ENCODE measurements at regions of chr16 and their contacts with region 1.

Region 1: GRCh38 chr16:57720142-57720575 is 15.4 kb upstream of the KATNB1 start:
- DNase-seq: peak; percentile 80 to 90
- H3K4me3 ChIP-seq: no peak overlapping the region
- H3K4me3 Mint-ChIP-seq: no peak overlapping the region
- H3K27ac Mint-ChIP-seq: no peak overlapping the region
- H3K4me1 ChIP-seq: no peaks in the 10 kb centered on the region
- H3K4me1 Mint-ChIP-seq: no peaks in the 10 kb centered on the region
- H3K27me3 ChIP-seq: no peaks in the 10 kb centered on the region
- H3K27me3 Mint-ChIP-seq: no peaks in the 10 kb centered on the region
- CTCF ChIP-seq: peak; percentile 80 to 95

Region 2: GRCh38 chr16:57576429-57576870 is 143.7 kb before region 1 on chr16:
- CTCF ChIA-PET with region 1: no interaction called
- POLR2A ChIA-PET with region 1: no interaction called
- intact Hi-C with region 1: loop called (anchors 1 kb)
- DNase-seq: peak; percentile 74 to 82
- H3K4me3 ChIP-seq: no peak overlapping the region
- H3K4me3 Mint-ChIP-seq: no peak overlapping the region
- H3K27ac Mint-ChIP-seq: no peak overlapping the region
- H3K4me1 ChIP-seq: 0 out of 2 replicates have a peak, but pooled peaks cover 4% of the 10 kb centered on the region
- H3K4me1 Mint-ChIP-seq: no peaks in the 10 kb centered on the region
- H3K27me3 ChIP-seq: no peaks in the 10 kb centered on the region
- H3K27me3 Mint-ChIP-seq: no peaks in the 10 kb centered on the region
- CTCF ChIP-seq: peak; percentile 97

Region 3: GRCh38 chr16:57600048-57600835 is 119.9 kb before region 1 on chr16:
- CTCF ChIA-PET with region 1: interaction called, 3 read pairs
- POLR2A ChIA-PET with region 1: no interaction called
- intact Hi-C with region 1: loop called (anchors 1 kb)
- DNase-seq: peak; percentile 84 to 88
- H3K4me3 ChIP-seq: no peak overlapping the region
- H3K4me3 Mint-ChIP-seq: no peak overlapping the region
- H3K27ac Mint-ChIP-seq: no peak overlapping the region
- H3K4me1 ChIP-seq: peaks cover 3% of the 10 kb centered on the region; the same call in 1 of the 2 replicates
- H3K4me1 Mint-ChIP-seq: no peaks in the 10 kb centered on the region
- H3K27me3 ChIP-seq: no peaks in the 10 kb centered on the region
- H3K27me3 Mint-ChIP-seq: no peaks in the 10 kb centered on the region
- CTCF ChIP-seq: peak; percentile 92 to 98

Region 4: GRCh38 chr16:57667526-57668258 is 52.5 kb before region 1 on chr16:
- CTCF ChIA-PET with region 1: interaction called, 3 read pairs
- POLR2A ChIA-PET with region 1: no interaction called
- intact Hi-C with region 1: loop called (anchors 1 kb)
- DNase-seq: peak in 1 of 2 experiments; percentile 66
- H3K4me3 ChIP-seq: no peak overlapping the region
- H3K4me3 Mint-ChIP-seq: no peak overlapping the region
- H3K27ac Mint-ChIP-seq: no peak overlapping the region
- H3K4me1 ChIP-seq: peaks cover 15% of the 10 kb centered on the region
- H3K4me1 Mint-ChIP-seq: no peaks in the 10 kb centered on the region
- H3K27me3 ChIP-seq: no peaks in the 10 kb centered on the region
- H3K27me3 Mint-ChIP-seq: no peaks in the 10 kb centered on the region
- CTCF ChIP-seq: peak in 1 of 2 experiments; percentile 41

Region 5: DNA sequence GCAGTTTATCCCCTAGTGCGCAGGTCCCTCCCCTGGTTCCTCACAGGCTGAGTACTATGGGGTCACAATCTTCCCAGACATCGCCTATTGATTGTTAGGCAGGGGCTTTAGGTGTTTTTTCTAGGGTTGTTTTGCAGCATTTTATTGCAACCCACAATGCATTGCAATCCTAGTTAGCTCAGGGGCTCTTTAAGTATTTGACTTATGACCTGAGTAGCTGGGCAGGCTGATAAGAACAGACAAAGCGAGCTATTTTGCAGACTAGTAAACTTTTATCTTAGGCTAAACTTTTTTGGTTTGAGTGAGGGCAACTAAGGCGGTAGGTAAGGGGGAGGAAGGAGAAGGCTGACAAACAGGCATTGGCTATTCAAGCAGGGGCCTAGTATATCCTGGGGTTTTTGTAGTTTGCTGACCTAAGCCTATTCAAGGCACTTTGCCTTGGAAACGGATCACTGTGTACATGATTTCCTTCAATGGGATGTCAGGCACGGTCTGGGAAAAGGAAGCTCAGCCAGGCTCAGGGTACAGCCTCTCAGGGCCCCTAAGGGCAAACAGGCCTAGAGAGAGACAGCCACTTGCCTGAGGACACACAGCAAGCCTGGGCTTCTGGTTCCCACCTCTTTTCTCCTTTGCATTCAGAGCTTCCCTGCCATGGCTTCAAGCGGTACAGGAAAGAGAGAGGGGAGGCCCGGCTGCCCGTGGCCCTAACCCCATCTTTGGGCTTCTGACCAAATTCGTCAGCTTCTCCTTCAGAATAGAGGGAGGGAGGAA is 19.2 kb before region 1 on chr16:
- CTCF ChIA-PET with region 1: interaction called, 6 read pairs
- POLR2A ChIA-PET with region 1: no interaction called
- intact Hi-C with region 1: loop called (anchors 1 kb)
- DNase-seq: peak; percentile 86 to 88
- H3K4me3 ChIP-seq: no peak overlapping the region
- H3K4me3 Mint-ChIP-seq: peak overlapping the region; percentile 45
- H3K27ac Mint-ChIP-seq: peak overlapping the region; percentile 97
- H3K4me1 ChIP-seq: peaks cover 63% of the 10 kb centered on the region
- H3K4me1 Mint-ChIP-seq: peaks cover 35% of the 10 kb centered on the region
- H3K27me3 ChIP-seq: no peaks in the 10 kb centered on the region
- H3K27me3 Mint-ChIP-seq: no peaks in the 10 kb centered on the region
- CTCF ChIP-seq: no peak

Region 6: GRCh38 chr16:57846078-57846697 is 126.0 kb after region 1 on chr16:
- CTCF ChIA-PET with region 1: no interaction called
- POLR2A ChIA-PET with region 1: no interaction called
- intact Hi-C with region 1: no loop called
- DNase-seq: peak; percentile 71 to 76
- H3K4me3 ChIP-seq: no peak overlapping the region
- H3K4me3 Mint-ChIP-seq: peak overlapping the region; percentile 18
- H3K27ac Mint-ChIP-seq: peak overlapping the region; percentile 0
- H3K4me1 ChIP-seq: peaks cover 19% of the 10 kb centered on the region
- H3K4me1 Mint-ChIP-seq: peaks cover 16% of the 10 kb centered on the region
- H3K27me3 ChIP-seq: no peaks in the 10 kb centered on the region
- H3K27me3 Mint-ChIP-seq: no peaks in the 10 kb centered on the region
- CTCF ChIP-seq: no peak

Measured in Caco-2 (cell line).